BJ (cell line): ENCODE measurements at regions of chr5 and their contacts with region 1.

Region 1: DNA sequence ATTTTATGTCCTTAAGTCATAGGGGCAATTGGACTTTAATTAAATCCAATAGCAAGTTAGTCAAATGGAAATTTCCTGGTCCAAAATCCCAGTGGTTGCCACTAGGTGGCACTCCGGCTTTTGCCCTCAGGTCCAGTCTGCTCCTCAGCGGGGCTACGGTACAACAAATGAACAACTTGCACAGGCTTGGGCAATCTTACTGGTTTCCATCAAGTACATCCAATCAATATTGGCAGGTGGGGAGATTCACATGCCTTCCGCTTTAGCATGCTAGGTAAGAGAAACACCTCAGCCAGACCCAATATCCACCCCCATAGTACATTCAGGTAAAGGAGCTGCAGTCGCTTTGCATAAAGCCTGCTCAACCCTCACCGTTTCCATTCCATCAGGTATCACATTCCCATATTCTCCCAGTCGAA is 6.3 kb upstream of the MXD3 start:
- DNase-seq: no peak
- H3K4me3 ChIP-seq: no peak overlapping the region
- H3K27me3 ChIP-seq: no peaks in the 10 kb centered on the region
- CTCF ChIP-seq: peak; percentile 92

Region 2: GRCh38 chr5:177336112-177336511 is 18.1 kb after region 1 on chr5:
- CTCF ChIA-PET with region 1: interaction called, 36 read pairs
- POLR2A ChIA-PET with region 1: no interaction called
- DNase-seq: no peak
- H3K4me3 ChIP-seq: no peak overlapping the region
- H3K27me3 ChIP-seq: no peaks in the 10 kb centered on the region
- CTCF ChIP-seq: peak; percentile 39

Region 3: GRCh38 chr5:177390363-177391300 is 72.7 kb after region 1 on chr5:
- CTCF ChIA-PET with region 1: interaction called, 20 read pairs
- POLR2A ChIA-PET with region 1: no interaction called
- DNase-seq: no peak
- H3K4me3 ChIP-seq: no peak overlapping the region
- H3K27me3 ChIP-seq: peaks cover 11% of the 10 kb centered on the region
- CTCF ChIP-seq: peak; percentile 95